Heart right ventricle (tissue), 16 donors: ENCODE measurements at regions of chr12 and their contacts with region 1.

Region 1: DNA sequence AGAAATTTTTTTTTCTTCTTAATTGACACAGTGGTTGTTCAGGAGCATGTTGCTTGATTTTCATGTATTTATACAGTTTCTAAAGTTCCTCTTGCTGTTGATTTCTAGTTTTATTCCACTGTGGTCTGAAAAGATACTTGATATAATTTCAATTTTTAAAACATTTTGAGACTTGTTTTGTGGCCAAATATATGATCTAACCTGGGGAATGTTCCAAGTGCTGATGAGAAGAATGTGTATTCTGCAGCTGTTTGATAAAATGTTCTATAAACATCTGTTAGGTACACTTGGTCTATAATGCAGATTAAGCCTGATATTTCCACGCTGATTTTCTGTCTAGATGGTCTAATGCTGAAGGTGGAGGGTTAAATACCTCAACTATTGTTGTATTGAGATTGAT is 151.4 kb upstream of the IFNG-AS1 start:
- DNase-seq: no peak
- ATAC-seq: no peak
- H3K4me3 ChIP-seq: no peak overlapping the region
- H3K27ac ChIP-seq: no peak overlapping the region
- H3K4me1 ChIP-seq: no peaks in the 10 kb centered on the region
- H3K27me3 ChIP-seq: no peaks in the 10 kb centered on the region
- CTCF ChIP-seq: no peak

Region 2: GRCh38 chr12:67797185-67797741 is 40.6 kb before region 1 on chr12:
- intact Hi-C with region 1: no loop called
- DNase-seq: peak in 1 of 2 donors; percentile 14
- ATAC-seq: peak; percentile 29 to 88 (median 78)
- H3K4me3 ChIP-seq: peak overlapping the region in 3 of 10 donors; percentile 1 to 12 (median 2)
- H3K27ac ChIP-seq: peak overlapping the region in 8 of 10 donors; percentile 10 to 66 (median 52)
- H3K4me1 ChIP-seq: peaks cover 0 to 37% (median 12%) of the 10 kb centered on the region in 9 donors
- H3K27me3 ChIP-seq: no peaks in the 10 kb centered on the region
- CTCF ChIP-seq: no peak

Region 3: DNA sequence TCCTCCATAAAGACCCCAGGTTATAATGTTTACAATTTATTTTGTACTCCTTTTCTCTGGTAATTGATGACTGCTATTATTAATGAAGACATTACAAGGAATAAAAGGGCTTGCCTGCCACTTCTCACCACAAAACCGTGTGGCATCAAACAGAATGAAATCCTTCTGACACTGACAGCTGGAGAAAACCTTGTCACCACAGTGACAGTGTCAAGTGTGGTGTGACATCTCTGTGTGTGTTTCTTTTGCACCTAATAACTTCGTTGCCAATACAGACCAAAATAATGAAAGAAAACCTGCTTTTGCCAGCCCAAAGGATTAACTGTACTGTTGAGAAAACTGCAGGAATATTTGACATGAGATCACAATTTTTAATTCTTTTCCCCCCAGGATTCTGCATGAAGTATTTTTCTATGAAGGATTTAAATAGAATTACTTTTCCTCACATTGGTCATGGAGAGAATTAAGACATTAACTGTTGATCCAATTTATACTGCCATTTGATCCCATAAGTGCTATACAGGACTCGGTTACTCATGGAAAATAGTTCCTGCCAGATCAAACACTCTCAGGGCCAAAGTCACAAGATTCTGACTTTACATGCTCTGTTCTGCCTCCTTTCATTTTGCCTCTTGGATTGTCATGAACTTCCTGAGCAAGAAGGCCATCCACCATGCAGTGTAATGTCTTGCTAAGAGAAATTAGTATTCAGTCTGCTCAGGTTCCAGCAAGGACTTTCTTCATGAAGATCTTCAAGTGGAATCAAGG is 90.9 kb after region 1 on chr12:
- intact Hi-C with region 1: loop called in 1 of 10 experiments (anchors 10 kb)
- DNase-seq: no peak
- ATAC-seq: peak in 6 of 8 donors; percentile 16 to 67 (median 46)
- H3K4me3 ChIP-seq: peak overlapping the region in 1 of 10 donors; percentile 5
- H3K27ac ChIP-seq: peak overlapping the region in 4 of 10 donors; percentile 11 to 70 (median 44)
- H3K4me1 ChIP-seq: peaks cover 0 to 18% (median 6%) of the 10 kb centered on the region in 9 donors
- H3K27me3 ChIP-seq: no peaks in the 10 kb centered on the region
- CTCF ChIP-seq: no peak